ENCODE measurements at regions of chr2 and their contacts with region 1.

Region 1: GRCh38 chr2:60674524-60675165 is 81.4 kb upstream of the PAPOLG start:
- DNase-seq: peak; percentile 85
- ATAC-seq: peak; percentile 100
- H3K4me3 ChIP-seq: no peak overlapping the region
- H3K4me3 Mint-ChIP-seq: no peak overlapping the region
- H3K27ac ChIP-seq: no peak overlapping the region
- H3K27ac Mint-ChIP-seq: peak overlapping the region; percentile 50
- H3K4me1 ChIP-seq: peaks cover 0 to 3% of the 10 kb centered on the region in 2 donors
- H3K4me1 Mint-ChIP-seq: peaks cover 4% of the 10 kb centered on the region
- H3K27me3 ChIP-seq: peaks cover 0 to 3% (median 0%) of the 10 kb centered on the region in 4 experiments
- H3K27me3 Mint-ChIP-seq: no peaks in the 10 kb centered on the region
- CTCF ChIP-seq: peak; percentile 93

Region 2: GRCh38 chr2:59025157-59025757 is 1649.4 kb before region 1 on chr2:
- CTCF ChIA-PET with region 1: interaction called, 15 read pairs
- POLR2A ChIA-PET with region 1: no interaction called
- intact Hi-C with region 1: loop called (anchors 2 kb)
- DNase-seq: peak; percentile 71
- ATAC-seq: peak; percentile 66
- H3K4me3 ChIP-seq: no peak overlapping the region
- H3K4me3 Mint-ChIP-seq: peak overlapping the region; percentile 28
- H3K27ac ChIP-seq: no peak overlapping the region
- H3K27ac Mint-ChIP-seq: no peak overlapping the region
- H3K4me1 ChIP-seq: peaks cover 0 to 3% of the 10 kb centered on the region in 2 donors
- H3K4me1 Mint-ChIP-seq: peaks cover 2% of the 10 kb centered on the region
- H3K27me3 ChIP-seq: peaks cover 0 to 2% (median 0%) of the 10 kb centered on the region in 4 experiments
- H3K27me3 Mint-ChIP-seq: peaks cover 17% of the 10 kb centered on the region
- CTCF ChIP-seq: peak; percentile 86

Region 3: DNA sequence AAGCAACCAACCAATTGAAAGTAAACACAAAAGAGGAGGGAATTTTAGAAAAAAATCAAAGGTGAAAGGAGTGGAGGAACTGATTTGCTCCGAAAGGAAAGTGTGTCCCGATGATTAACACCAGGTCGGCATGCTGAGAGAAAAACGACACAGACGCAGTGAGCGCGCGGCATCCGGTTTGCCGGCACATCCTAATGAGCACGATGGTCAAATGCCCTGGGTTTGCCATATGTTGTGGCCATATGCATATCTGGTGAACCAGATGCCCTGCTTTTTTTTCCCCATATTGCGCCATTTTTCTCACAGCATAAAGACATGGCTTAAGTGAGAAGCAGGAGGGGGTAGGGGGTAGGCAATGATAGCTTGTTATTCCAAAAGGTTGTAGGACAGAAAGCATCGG is 747.9 kb before region 1 on chr2:
- CTCF ChIA-PET with region 1: no interaction called
- POLR2A ChIA-PET with region 1: no interaction called
- intact Hi-C with region 1: no loop called
- DNase-seq: no peak
- ATAC-seq: no peak
- H3K4me3 ChIP-seq: no peak overlapping the region
- H3K4me3 Mint-ChIP-seq: no peak overlapping the region
- H3K27ac ChIP-seq: no peak overlapping the region
- H3K27ac Mint-ChIP-seq: no peak overlapping the region
- H3K4me1 ChIP-seq: peaks cover 10 to 13% of the 10 kb centered on the region in 2 donors
- H3K4me1 Mint-ChIP-seq: peaks cover 17% of the 10 kb centered on the region
- H3K27me3 ChIP-seq: no peaks in the 10 kb centered on the region
- H3K27me3 Mint-ChIP-seq: peaks cover 11% of the 10 kb centered on the region
- CTCF ChIP-seq: no peak

Region 4: DNA sequence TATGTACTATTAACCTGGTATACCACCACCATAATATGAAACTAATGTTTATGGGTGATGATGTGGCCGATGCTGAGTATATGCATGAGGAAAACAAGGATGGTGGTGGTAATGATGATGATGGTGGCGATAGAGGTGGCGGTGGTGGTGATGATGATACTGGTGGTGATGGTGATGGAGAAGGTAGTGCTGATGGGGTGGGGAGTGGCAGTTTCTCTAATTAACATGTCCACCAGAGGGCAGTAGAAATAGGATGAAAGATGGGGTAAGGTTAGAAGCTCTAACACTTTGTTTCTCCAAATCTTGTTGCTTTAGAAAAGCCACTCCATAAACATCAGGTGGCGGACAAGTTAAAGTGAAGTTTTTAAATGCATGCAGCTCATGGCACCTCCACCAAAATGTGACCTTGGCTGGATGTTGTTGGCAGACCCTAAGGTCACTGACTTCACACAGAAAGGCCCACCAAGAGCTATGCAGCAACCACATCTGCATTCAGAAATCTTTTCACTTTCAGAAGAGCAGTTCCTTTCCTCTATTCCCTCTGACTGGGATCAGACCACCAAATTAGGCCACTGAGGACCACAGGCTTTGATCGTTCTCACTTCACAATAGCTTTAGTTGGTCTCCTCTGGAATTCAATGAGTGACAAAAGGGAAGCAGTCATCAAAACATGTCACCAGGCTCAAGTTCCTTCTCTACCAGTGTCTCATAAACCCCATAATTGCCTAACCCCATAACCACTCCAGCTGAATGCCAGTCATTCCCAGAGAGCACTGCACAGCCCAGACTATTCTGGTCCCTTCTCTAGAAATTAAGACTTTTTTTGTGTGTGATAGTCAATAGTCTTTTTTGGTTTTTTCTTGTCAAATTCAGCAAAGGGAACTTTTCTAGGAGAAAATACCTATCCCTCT is 113.7 kb before region 1 on chr2:
- CTCF ChIA-PET with region 1: interaction called, 44 read pairs
- POLR2A ChIA-PET with region 1: interaction called, 5 read pairs
- intact Hi-C with region 1: loop called (anchors 2 kb)
- DNase-seq: peak; percentile 75
- ATAC-seq: peak; percentile 53
- H3K4me3 ChIP-seq: no peak overlapping the region
- H3K4me3 Mint-ChIP-seq: no peak overlapping the region
- H3K27ac ChIP-seq: no peak overlapping the region
- H3K27ac Mint-ChIP-seq: peak overlapping the region; percentile 70
- H3K4me1 ChIP-seq: peaks cover 18% of the 10 kb centered on the region in 2 donors
- H3K4me1 Mint-ChIP-seq: peaks cover 37% of the 10 kb centered on the region
- H3K27me3 ChIP-seq: no peaks in the 10 kb centered on the region
- H3K27me3 Mint-ChIP-seq: no peaks in the 10 kb centered on the region
- CTCF ChIP-seq: peak; percentile 63

Region 5: DNA sequence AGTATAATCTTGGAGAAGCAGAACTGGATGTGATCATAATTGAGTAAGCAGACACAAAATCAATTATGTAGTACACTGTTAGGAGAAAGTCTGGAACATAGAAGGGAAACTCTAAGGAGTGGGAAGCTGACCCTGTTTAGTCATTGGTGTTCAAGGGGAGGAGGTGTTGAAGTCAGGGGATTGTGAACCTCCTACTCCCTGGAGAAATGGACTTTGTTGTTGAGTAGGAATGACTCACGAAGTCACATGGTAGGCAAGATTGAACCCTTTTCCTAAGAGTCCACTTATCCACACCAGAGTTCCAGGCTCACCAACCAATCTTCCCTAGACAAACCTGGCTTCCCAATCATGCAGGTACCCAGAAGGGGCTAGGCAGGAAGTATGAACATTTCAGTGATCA is 40.2 kb before region 1 on chr2:
- CTCF ChIA-PET with region 1: interaction called, 135 read pairs
- POLR2A ChIA-PET with region 1: no interaction called
- intact Hi-C with region 1: no loop called
- DNase-seq: no peak
- ATAC-seq: no peak
- H3K4me3 ChIP-seq: no peak overlapping the region
- H3K4me3 Mint-ChIP-seq: no peak overlapping the region
- H3K27ac ChIP-seq: no peak overlapping the region
- H3K27ac Mint-ChIP-seq: no peak overlapping the region
- H3K4me1 ChIP-seq: no peaks in the 10 kb centered on the region
- H3K4me1 Mint-ChIP-seq: no peaks in the 10 kb centered on the region
- H3K27me3 ChIP-seq: no peaks in the 10 kb centered on the region
- H3K27me3 Mint-ChIP-seq: peaks cover 26% of the 10 kb centered on the region
- CTCF ChIP-seq: no peak

Region 6: DNA sequence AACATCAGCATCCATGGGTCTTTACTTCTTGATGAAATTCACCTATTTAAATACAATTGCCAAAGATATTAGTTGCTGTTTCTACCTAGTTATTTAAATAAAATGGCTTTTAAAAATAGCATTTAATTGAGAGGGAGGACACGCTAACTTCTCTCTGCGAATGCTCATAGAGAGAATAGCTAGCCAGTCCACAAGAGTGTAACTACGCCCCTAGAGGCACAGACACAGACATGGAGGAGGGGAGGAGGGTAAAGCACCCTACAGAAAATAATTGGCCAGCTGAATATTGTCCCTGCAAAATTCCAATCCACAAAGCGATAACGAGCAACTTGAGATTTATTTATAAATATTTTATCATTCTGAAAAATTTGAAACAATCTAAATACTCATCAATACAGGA is 15.6 kb before region 1 on chr2:
- CTCF ChIA-PET with region 1: interaction called, 68 read pairs
- POLR2A ChIA-PET with region 1: interaction called, 3 read pairs
- intact Hi-C with region 1: loop called (anchors 2 kb)
- DNase-seq: no peak
- ATAC-seq: no peak
- H3K4me3 ChIP-seq: no peak overlapping the region
- H3K4me3 Mint-ChIP-seq: no peak overlapping the region
- H3K27ac ChIP-seq: no peak overlapping the region
- H3K27ac Mint-ChIP-seq: peak overlapping the region; percentile 23
- H3K4me1 ChIP-seq: peaks cover 38 to 39% of the 10 kb centered on the region in 2 donors
- H3K4me1 Mint-ChIP-seq: peaks cover 56% of the 10 kb centered on the region
- H3K27me3 ChIP-seq: no peaks in the 10 kb centered on the region
- H3K27me3 Mint-ChIP-seq: no peaks in the 10 kb centered on the region
- CTCF ChIP-seq: no peak

Region 7: GRCh38 chr2:61029533-61029932 is 354.9 kb after region 1 on chr2:
- CTCF ChIA-PET with region 1: no interaction called
- POLR2A ChIA-PET with region 1: no interaction called
- intact Hi-C with region 1: no loop called
- DNase-seq: no peak
- ATAC-seq: no peak
- H3K4me3 ChIP-seq: no peak overlapping the region
- H3K4me3 Mint-ChIP-seq: no peak overlapping the region
- H3K27ac ChIP-seq: no peak overlapping the region
- H3K27ac Mint-ChIP-seq: no peak overlapping the region
- H3K4me1 ChIP-seq: no peaks in the 10 kb centered on the region
- H3K4me1 Mint-ChIP-seq: peaks cover 5% of the 10 kb centered on the region
- H3K27me3 ChIP-seq: no peaks in the 10 kb centered on the region
- H3K27me3 Mint-ChIP-seq: no peaks in the 10 kb centered on the region
- CTCF ChIP-seq: no peak

Region 8: GRCh38 chr2:61898810-61899209 is 1224.2 kb after region 1 on chr2:
- CTCF ChIA-PET with region 1: no interaction called
- POLR2A ChIA-PET with region 1: interaction called, 11 read pairs
- intact Hi-C with region 1: no loop called
- DNase-seq: no peak
- ATAC-seq: no peak
- H3K4me3 ChIP-seq: no peak overlapping the region
- H3K4me3 Mint-ChIP-seq: no peak overlapping the region
- H3K27ac ChIP-seq: no peak overlapping the region
- H3K27ac Mint-ChIP-seq: no peak overlapping the region
- H3K4me1 ChIP-seq: no peaks in the 10 kb centered on the region
- H3K4me1 Mint-ChIP-seq: no peaks in the 10 kb centered on the region
- H3K27me3 ChIP-seq: no peaks in the 10 kb centered on the region
- H3K27me3 Mint-ChIP-seq: no peaks in the 10 kb centered on the region
- CTCF ChIP-seq: peak; percentile 32